Calu3 (cell line): ENCODE measurements at regions of chr11 and their contacts with region 1.

Region 1: GRCh38 chr11:72573072-72573854 is 101.0 kb downstream of the PDE2A start:
- DNase-seq: peak; percentile 63
- H3K4me3 Mint-ChIP-seq: no peak overlapping the region
- H3K27ac Mint-ChIP-seq: no peak overlapping the region
- H3K4me1 Mint-ChIP-seq: peaks cover 21% of the 10 kb centered on the region
- H3K27me3 Mint-ChIP-seq: peaks cover 19% of the 10 kb centered on the region
- CTCF ChIP-seq: peak; percentile 76

Region 2: GRCh38 chr11:72308226-72309073 is 264.8 kb before region 1 on chr11:
- CTCF ChIA-PET with region 1: no interaction called
- intact Hi-C with region 1: no loop called
- DNase-seq: no peak
- H3K4me3 Mint-ChIP-seq: no peak overlapping the region
- H3K27ac Mint-ChIP-seq: no peak overlapping the region
- H3K4me1 Mint-ChIP-seq: no peaks in the 10 kb centered on the region
- H3K27me3 Mint-ChIP-seq: no peaks in the 10 kb centered on the region
- CTCF ChIP-seq: no peak

Region 3: GRCh38 chr11:72378704-72379384 is 194.4 kb before region 1 on chr11:
- CTCF ChIA-PET with region 1: no interaction called
- intact Hi-C with region 1: no loop called
- DNase-seq: no peak
- H3K4me3 Mint-ChIP-seq: no peak overlapping the region
- H3K27ac Mint-ChIP-seq: no peak overlapping the region
- H3K4me1 Mint-ChIP-seq: no peaks in the 10 kb centered on the region
- H3K27me3 Mint-ChIP-seq: no peaks in the 10 kb centered on the region
- CTCF ChIP-seq: no peak

Region 4: GRCh38 chr11:72471005-72471898 is 102.0 kb before region 1 on chr11:
- CTCF ChIA-PET with region 1: interaction called, 27 read pairs
- intact Hi-C with region 1: no loop called
- DNase-seq: peak; percentile 69
- H3K4me3 Mint-ChIP-seq: peak overlapping the region; percentile 13
- H3K27ac Mint-ChIP-seq: no peak overlapping the region
- H3K4me1 Mint-ChIP-seq: no peaks in the 10 kb centered on the region
- H3K27me3 Mint-ChIP-seq: peaks cover 86% of the 10 kb centered on the region
- CTCF ChIP-seq: peak; percentile 57

Region 5: GRCh38 chr11:72483412-72484186 is 89.7 kb before region 1 on chr11:
- CTCF ChIA-PET with region 1: interaction called, 4 read pairs
- intact Hi-C with region 1: loop called (anchors 1 kb)
- DNase-seq: no peak
- H3K4me3 Mint-ChIP-seq: no peak overlapping the region
- H3K27ac Mint-ChIP-seq: no peak overlapping the region
- H3K4me1 Mint-ChIP-seq: peaks cover 16% of the 10 kb centered on the region
- H3K27me3 Mint-ChIP-seq: peaks cover 13% of the 10 kb centered on the region
- CTCF ChIP-seq: no peak

Region 6: GRCh38 chr11:72519220-72519881 is 53.9 kb before region 1 on chr11:
- CTCF ChIA-PET with region 1: no interaction called
- intact Hi-C with region 1: no loop called
- DNase-seq: no peak
- H3K4me3 Mint-ChIP-seq: no peak overlapping the region
- H3K27ac Mint-ChIP-seq: no peak overlapping the region
- H3K4me1 Mint-ChIP-seq: no peaks in the 10 kb centered on the region
- H3K27me3 Mint-ChIP-seq: peaks cover 83% of the 10 kb centered on the region
- CTCF ChIP-seq: no peak

Region 7: DNA sequence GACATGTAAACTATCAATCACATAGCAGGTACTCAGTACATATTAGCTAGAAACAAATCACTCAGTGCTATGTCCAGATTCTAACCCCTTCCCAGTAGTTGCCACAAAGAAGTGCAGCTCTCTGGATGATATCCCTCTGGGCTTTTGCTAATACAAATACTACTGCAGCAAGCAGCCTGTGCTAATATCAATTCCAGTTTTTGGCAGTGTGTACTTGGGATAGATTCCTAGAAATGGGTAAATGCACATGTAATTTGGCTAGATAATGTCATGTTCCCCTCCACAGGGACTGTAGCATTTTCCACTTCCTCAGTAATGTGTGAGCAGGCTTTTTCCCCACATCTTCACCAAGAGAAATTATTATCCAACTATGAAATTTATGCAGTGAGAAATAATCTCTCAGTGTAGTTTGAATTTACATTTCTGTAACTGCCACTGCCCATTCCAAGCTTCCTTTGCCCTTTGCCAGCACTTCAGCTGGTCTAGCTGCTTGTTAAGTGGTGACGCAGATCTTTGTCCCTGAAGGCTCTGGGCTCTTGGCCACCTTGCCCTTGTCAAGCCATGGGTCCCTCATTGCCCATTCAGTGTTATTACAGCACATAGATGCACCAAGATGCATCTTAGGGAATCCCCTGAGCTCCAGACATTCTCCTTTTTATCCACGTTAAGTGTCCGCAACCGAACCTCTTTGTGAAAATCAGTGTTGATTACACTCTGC is 31.8 kb before region 1 on chr11:
- CTCF ChIA-PET with region 1: no interaction called
- intact Hi-C with region 1: no loop called
- DNase-seq: no peak
- H3K4me3 Mint-ChIP-seq: no peak overlapping the region
- H3K27ac Mint-ChIP-seq: no peak overlapping the region
- H3K4me1 Mint-ChIP-seq: no peaks in the 10 kb centered on the region
- H3K27me3 Mint-ChIP-seq: peaks cover 88% of the 10 kb centered on the region
- CTCF ChIP-seq: no peak